ENCODE measurements at regions of chr6 and their contacts with region 1.

Region 1: DNA sequence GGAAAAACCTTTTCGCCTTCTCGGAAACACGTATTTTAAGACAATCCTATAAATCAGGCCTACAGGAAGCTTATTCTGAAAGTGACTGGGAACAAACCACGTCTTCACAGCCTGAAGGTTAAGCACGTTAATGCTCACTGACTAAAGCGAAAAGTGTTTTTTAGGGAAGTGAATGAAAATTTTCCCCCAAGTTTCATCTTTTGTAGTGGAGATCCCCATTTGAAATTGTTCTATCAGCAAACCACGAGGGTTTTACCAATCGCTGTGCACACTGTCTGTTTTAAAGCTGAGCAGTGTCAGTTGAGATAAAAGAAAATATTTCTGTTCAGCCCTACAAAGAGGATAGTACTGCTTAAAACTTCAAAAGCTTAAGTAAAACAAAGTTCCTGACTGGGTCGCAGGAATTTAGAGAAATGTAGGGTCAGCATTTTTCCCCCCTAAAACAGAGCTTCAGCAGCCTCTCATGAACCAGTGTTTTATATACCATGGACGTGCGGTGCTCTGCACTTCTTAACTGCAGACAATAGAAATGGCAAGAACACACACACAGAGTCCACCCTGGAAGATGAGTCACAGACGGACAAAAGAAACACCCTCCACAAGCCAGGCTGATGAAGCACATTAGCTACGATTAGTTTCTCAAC is 34.9 kb downstream of the SLC22A23 start:
- DNase-seq: no peak
- ATAC-seq: no peak
- H3K4me3 ChIP-seq: no peak overlapping the region
- H3K4me3 Mint-ChIP-seq: no peak overlapping the region
- H3K27ac ChIP-seq: no peak overlapping the region
- H3K27ac Mint-ChIP-seq: no peak overlapping the region
- H3K4me1 ChIP-seq: no peaks in the 10 kb centered on the region
- H3K4me1 Mint-ChIP-seq: peaks cover 3% of the 10 kb centered on the region
- H3K27me3 ChIP-seq: no peaks in the 10 kb centered on the region
- H3K27me3 Mint-ChIP-seq: peaks cover 4% of the 10 kb centered on the region
- CTCF ChIP-seq: no peak

Region 2: GRCh38 chr6:3410385-3411360 is 11.2 kb before region 1 on chr6:
- CTCF ChIA-PET with region 1: interaction called, 10 read pairs
- POLR2A ChIA-PET with region 1: no interaction called
- intact Hi-C with region 1: no loop called
- DNase-seq: peak; percentile 30 to 77 (median 68)
- ATAC-seq: peak; percentile 70
- H3K4me3 ChIP-seq: no peak overlapping the region
- H3K4me3 Mint-ChIP-seq: no peak overlapping the region
- H3K27ac ChIP-seq: no peak overlapping the region
- H3K27ac Mint-ChIP-seq: no peak overlapping the region
- H3K4me1 ChIP-seq: peaks cover 6% of the 10 kb centered on the region
- H3K4me1 Mint-ChIP-seq: peaks cover 10% of the 10 kb centered on the region
- H3K27me3 ChIP-seq: no peaks in the 10 kb centered on the region
- H3K27me3 Mint-ChIP-seq: no peaks in the 10 kb centered on the region
- CTCF ChIP-seq: peak; percentile 60